ENCODE measurements at regions of chr5 and their contacts with region 1.

Region 1: GRCh38 chr5:132695956-132696355 is 22.2 kb downstream of the IL4 start:
- DNase-seq: no peak
- ATAC-seq: no peak
- H3K4me3 ChIP-seq: no peak overlapping the region
- H3K27ac ChIP-seq: no peak overlapping the region
- H3K4me1 ChIP-seq: no peaks in the 10 kb centered on the region
- H3K27me3 ChIP-seq: no peaks in the 10 kb centered on the region
- CTCF ChIP-seq: no peak

Region 2: GRCh38 chr5:132646867-132647266 is 49.1 kb before region 1 on chr5:
- intact Hi-C with region 1: loop called in 1 of 10 experiments (anchors 1 kb)
- DNase-seq: no peak
- ATAC-seq: no peak
- H3K4me3 ChIP-seq: no peak overlapping the region
- H3K27ac ChIP-seq: no peak overlapping the region
- H3K4me1 ChIP-seq: no peaks in the 10 kb centered on the region
- H3K27me3 ChIP-seq: no peaks in the 10 kb centered on the region
- CTCF ChIP-seq: no peak

Region 3: GRCh38 chr5:132883261-132883834 is 187.4 kb after region 1 on chr5:
- intact Hi-C with region 1: no loop called
- DNase-seq: peak in 1 of 2 donors; percentile 59
- ATAC-seq: peak; percentile 72 to 91 (median 86)
- H3K4me3 ChIP-seq: no peak overlapping the region
- H3K27ac ChIP-seq: no peak overlapping the region
- H3K4me1 ChIP-seq: peaks cover 0 to 10% (median under 1%) of the 10 kb centered on the region in 9 donors
- H3K27me3 ChIP-seq: no peaks in the 10 kb centered on the region
- CTCF ChIP-seq: peak; percentile 39 to 78 (median 68)

Measured in heart right ventricle (tissue), 16 donors.